ENCODE measurements at regions of chr13 and their contacts with region 1.

Region 1: GRCh38 chr13:78830508-78830907 is 171.6 kb upstream of the OBI1 start:
- DNase-seq: no peak
- H3K4me3 ChIP-seq: no peak overlapping the region
- H3K27ac ChIP-seq: no peak overlapping the region
- H3K4me1 ChIP-seq: no peaks in the 10 kb centered on the region
- H3K27me3 ChIP-seq: no peaks in the 10 kb centered on the region
- CTCF ChIP-seq: no peak

Region 2: GRCh38 chr13:78907006-78907405 is 76.5 kb after region 1 on chr13:
- intact Hi-C with region 1: loop called (anchors 2 kb)
- DNase-seq: no peak
- H3K4me3 ChIP-seq: no peak overlapping the region
- H3K27ac ChIP-seq: no peak overlapping the region
- H3K4me1 ChIP-seq: no peaks in the 10 kb centered on the region
- H3K27me3 ChIP-seq: no peaks in the 10 kb centered on the region
- CTCF ChIP-seq: no peak

Measured in tibial artery (tissue), 4 donors.